ENCODE measurements at regions of chr9 and their contacts with region 1.

Region 1: GRCh38 chr9:87324613-87325194 is 173.0 kb upstream of the DAPK1 start:
- DNase-seq: no peak
- H3K4me3 Mint-ChIP-seq: no peak overlapping the region
- H3K27ac Mint-ChIP-seq: no peak overlapping the region
- H3K4me1 Mint-ChIP-seq: no peaks in the 10 kb centered on the region
- H3K27me3 Mint-ChIP-seq: no peaks in the 10 kb centered on the region

Region 2: DNA sequence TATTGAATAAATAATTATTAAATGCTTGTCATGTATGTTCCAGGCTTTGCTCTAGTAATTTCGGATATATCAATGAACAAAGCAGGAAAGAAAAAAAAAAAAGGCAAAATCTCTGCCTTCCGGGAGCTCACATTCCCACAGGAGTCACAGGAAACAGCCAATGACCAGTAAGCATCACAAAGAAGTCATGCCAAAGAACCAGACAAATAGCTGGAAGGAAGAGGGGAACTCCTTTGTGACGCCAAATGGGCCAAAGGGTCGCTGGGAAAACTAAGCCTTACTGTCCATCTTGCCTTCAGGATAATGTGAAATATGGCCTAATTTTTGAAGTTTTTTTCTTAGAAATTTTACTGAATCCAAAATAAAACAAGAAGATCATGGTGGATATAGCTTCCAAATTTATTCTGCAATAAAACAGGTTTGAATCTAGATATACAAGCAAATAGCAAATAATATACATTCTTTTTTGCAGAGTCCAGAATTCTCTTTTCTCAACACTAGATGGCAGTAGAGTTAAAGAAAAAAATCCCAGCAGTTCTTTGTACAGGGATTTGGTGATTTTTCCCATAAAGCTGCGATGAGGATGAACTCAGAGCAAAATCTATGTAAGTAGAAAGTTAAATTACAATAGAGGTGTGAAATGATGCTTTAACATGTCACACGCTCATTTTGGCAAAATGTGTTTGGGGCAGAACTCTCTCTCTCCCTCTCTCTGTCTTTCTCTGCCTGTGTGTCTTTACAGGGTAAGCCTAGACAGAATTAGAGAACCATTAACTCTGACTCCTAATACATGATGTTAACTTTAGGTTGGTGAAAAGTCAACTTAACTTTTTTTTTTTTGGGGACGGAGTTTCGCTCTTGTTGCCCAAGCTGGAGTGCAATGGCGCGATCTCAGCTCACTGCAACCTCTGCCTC is 910.5 kb before region 1 on chr9:
- intact Hi-C with region 1: loop called (anchors 5 kb)
- DNase-seq: no peak
- H3K4me3 Mint-ChIP-seq: no peak overlapping the region
- H3K27ac Mint-ChIP-seq: no peak overlapping the region
- H3K4me1 Mint-ChIP-seq: no peaks in the 10 kb centered on the region
- H3K27me3 Mint-ChIP-seq: peaks cover 12% of the 10 kb centered on the region

Region 3: GRCh38 chr9:86434039-86434726 is 890.5 kb before region 1 on chr9:
- intact Hi-C with region 1: loop called (anchors 1 kb)
- DNase-seq: no peak
- H3K4me3 Mint-ChIP-seq: no peak overlapping the region
- H3K27ac Mint-ChIP-seq: no peak overlapping the region
- H3K4me1 Mint-ChIP-seq: no peaks in the 10 kb centered on the region
- H3K27me3 Mint-ChIP-seq: no peaks in the 10 kb centered on the region

Region 4: DNA sequence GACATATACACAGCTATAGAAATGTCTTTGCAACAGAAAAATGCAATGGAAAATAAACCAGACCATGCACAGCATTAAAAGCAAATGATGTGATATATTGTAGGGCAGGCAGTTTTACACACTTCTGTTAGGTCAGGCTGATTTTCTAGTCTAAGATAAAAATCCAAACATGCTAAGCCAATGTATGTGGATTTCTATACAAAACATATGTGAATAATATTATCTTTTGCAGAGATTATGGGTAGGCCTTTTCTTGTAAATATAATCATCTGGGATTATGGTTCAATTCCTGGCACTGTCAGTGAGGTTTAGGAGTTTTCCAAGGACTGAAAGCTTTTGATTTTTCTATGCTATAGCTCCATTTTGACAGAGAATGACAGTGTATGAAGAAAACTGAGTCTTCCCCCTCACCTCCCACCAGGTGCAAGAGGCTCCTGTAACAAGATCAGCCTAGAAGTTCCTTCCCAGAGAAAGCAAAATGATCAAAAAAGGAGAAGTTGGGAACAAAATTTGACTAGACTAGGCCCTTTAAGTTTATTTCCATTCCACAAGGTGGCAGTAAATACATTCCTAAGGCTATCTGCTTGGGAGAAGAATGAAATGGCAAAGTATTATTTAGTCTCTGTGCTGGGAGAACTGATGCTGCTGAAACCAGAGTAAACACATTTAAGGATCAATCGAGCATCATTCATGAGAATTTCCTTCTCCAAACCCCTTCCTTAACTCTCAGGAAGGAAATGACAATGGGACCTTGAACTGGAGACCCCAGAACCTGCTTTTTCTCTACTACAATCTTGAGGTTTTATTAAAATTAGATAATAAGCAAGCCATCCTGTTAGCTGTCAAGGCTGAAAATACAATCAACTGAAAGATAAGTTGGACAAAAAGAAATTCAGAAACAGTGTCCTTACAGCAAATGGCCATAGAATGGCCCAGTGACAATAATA is 837.5 kb before region 1 on chr9:
- intact Hi-C with region 1: loop called (anchors 2 kb)
- DNase-seq: no peak
- H3K4me3 Mint-ChIP-seq: no peak overlapping the region
- H3K27ac Mint-ChIP-seq: no peak overlapping the region
- H3K4me1 Mint-ChIP-seq: peaks cover 9% of the 10 kb centered on the region
- H3K27me3 Mint-ChIP-seq: peaks cover 4% of the 10 kb centered on the region

Region 5: GRCh38 chr9:86614871-86615849 is 709.5 kb before region 1 on chr9:
- intact Hi-C with region 1: loop called (anchors 10 kb)
- DNase-seq: no peak
- H3K4me3 Mint-ChIP-seq: no peak overlapping the region
- H3K27ac Mint-ChIP-seq: no peak overlapping the region
- H3K4me1 Mint-ChIP-seq: no peaks in the 10 kb centered on the region
- H3K27me3 Mint-ChIP-seq: no peaks in the 10 kb centered on the region

Region 6: GRCh38 chr9:87479801-87480201 is 155.1 kb after region 1 on chr9:
- intact Hi-C with region 1: no loop called
- DNase-seq: no peak
- H3K4me3 Mint-ChIP-seq: no peak overlapping the region
- H3K27ac Mint-ChIP-seq: no peak overlapping the region
- H3K4me1 Mint-ChIP-seq: peaks cover 8% of the 10 kb centered on the region
- H3K27me3 Mint-ChIP-seq: peaks cover 6% of the 10 kb centered on the region